ENCODE measurements at regions of chr3 and their contacts with region 1.

Region 1: GRCh38 chr3:11445883-11446282 is 173.7 kb downstream of the ATG7 start:
- DNase-seq: no peak

Region 2: GRCh38 chr3:11392014-11392859 is 53.6 kb before region 1 on chr3:
- intact Hi-C with region 1: loop called (anchors 5 kb)
- DNase-seq: no peak

Measured in cardiac septum (tissue), 1 donor.